Mammary epithelial cell (primary cell): ENCODE measurements at regions of chr3 and their contacts with region 1.

Region 1: DNA sequence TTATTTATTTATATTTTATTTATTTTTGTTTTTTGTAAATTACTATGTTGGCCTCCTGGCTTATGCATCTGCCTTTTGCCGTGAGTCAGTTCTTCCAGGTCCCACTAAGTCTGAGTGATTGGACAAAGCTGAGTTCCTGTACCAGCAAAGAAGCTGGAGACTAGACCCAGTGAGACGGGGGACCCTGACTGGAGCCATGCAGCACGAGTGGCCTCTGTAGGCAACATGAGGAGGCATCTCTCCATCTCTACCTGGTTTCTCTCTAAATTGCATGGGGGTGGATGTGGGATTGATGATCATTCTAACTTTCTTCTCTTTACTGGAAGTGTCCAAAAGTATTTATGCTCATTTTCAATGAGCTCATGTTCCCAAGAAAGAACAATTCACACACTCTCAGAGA is 155.3 kb upstream of the MRPL3 start:
- DNase-seq: no peak
- H3K4me3 ChIP-seq: no peak overlapping the region
- H3K27ac ChIP-seq: no peak overlapping the region
- H3K4me1 ChIP-seq: no peaks in the 10 kb centered on the region
- H3K27me3 ChIP-seq: peaks cover 2% of the 10 kb centered on the region
- CTCF ChIP-seq: no peak

Region 2: GRCh38 chr3:131216801-131217200 is 441.3 kb before region 1 on chr3:
- CTCF ChIA-PET with region 1: interaction called, 13 read pairs
- dilution Hi-C with region 1: no loop called
- in situ Hi-C with region 1: no loop called
- intact Hi-C with region 1: no loop called
- DNase-seq: peak; percentile 66
- H3K4me3 ChIP-seq: no peak overlapping the region
- H3K27ac ChIP-seq: peak overlapping the region; percentile 64
- H3K4me1 ChIP-seq: peaks cover 23% of the 10 kb centered on the region
- H3K27me3 ChIP-seq: no peaks in the 10 kb centered on the region
- CTCF ChIP-seq: no peak